ENCODE measurements at regions of chr11 and their contacts with region 1.

Region 1: DNA sequence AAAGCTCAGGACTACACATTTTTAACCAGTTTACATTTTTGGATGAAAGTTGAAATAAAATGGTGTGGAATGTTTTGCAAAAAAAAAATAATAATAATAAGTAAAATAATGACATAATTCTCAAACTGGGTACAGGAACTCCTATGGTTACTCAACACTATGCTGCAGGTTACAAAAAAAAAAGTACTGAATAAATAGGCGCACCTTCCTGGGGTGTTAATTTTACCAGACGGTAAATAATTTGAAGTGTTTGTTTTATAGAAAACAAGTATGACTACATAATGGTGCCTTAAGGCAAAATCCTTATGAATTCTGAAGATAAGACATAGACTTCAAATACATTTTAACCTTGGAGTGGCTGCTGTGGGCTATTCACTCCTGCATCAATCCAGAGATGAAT is 76.5 kb downstream of the RELT start:
- DNase-seq: no peak
- H3K4me3 ChIP-seq: no peak overlapping the region
- H3K27ac ChIP-seq: no peak overlapping the region
- H3K4me1 ChIP-seq: no peaks in the 10 kb centered on the region
- H3K27me3 ChIP-seq: no peaks in the 10 kb centered on the region
- CTCF ChIP-seq: no peak

Region 2: GRCh38 chr11:72951193-72951592 is 501.5 kb before region 1 on chr11:
- CTCF ChIA-PET with region 1: no interaction called
- POLR2A ChIA-PET with region 1: no interaction called
- intact Hi-C with region 1: no loop called
- DNase-seq: no peak
- H3K4me3 ChIP-seq: no peak overlapping the region
- H3K27ac ChIP-seq: no peak overlapping the region
- H3K4me1 ChIP-seq: no peaks in the 10 kb centered on the region
- H3K27me3 ChIP-seq: no peaks in the 10 kb centered on the region
- CTCF ChIP-seq: no peak

Region 3: DNA sequence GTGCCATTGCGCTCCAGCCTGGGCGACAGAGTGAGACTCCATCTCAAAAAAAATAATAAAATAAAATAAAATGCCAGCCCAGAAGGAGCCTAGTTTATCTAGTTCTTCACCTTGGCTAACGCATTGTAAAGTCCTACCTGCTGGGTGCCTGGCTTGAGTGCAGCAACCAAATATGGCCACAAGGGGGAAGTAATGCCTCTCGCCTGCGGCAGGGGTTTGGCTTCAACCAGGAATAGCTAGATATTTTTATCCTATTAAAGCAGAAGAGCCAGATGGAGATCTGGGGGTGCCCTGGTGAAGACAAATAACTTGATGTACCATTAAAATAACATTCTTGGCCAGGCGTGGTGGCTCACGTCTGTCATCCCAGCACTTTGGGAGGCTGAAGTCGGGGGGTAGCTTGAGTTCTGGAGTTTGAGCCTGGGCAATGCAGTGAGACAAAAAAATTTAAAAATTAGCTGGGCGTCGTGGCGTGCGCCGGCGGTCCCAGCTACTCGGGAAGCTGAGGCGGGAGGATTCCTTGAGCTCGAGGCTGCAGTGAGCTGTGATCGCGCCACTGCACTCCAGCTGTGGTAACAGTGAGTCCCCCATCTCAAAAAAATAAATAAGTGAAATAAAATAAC is 173.1 kb after region 1 on chr11:
- CTCF ChIA-PET with region 1: interaction called, 10 read pairs
- POLR2A ChIA-PET with region 1: no interaction called
- intact Hi-C with region 1: no loop called
- DNase-seq: peak; percentile 87
- H3K4me3 ChIP-seq: peak overlapping the region; percentile 20
- H3K27ac ChIP-seq: no peak overlapping the region
- H3K4me1 ChIP-seq: no peaks in the 10 kb centered on the region
- H3K27me3 ChIP-seq: no peaks in the 10 kb centered on the region
- CTCF ChIP-seq: peak; percentile 94